Naive thymus-derived CD4-positive, alpha-beta T cell (primary cell): ENCODE measurements at regions of chr11 and their contacts with region 1.

Region 1: DNA sequence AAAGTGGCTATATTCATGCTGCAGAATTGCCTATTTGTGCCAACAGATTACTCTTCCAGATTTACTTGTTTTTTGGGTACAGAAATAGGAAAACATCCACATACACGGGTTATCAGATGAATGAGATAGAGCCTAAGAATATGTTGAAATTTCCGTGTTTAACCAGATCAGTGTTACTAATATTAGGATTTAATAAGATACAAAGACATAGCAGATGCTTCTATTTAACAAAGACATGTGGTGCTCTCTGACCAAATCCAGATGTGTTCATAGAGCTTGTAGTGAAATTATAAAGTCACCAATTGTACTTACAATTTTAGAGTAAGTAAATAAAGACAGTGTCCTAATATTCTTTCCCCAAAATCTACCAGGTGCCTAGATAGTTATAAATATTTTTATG is 208.0 kb downstream of the CASP12 start:
- DNase-seq: no peak
- ATAC-seq: no peak
- H3K4me3 ChIP-seq: no peak overlapping the region
- H3K4me3 Mint-ChIP-seq: no peak overlapping the region
- H3K27ac ChIP-seq: no peak overlapping the region
- H3K27ac Mint-ChIP-seq: no peak overlapping the region
- H3K4me1 ChIP-seq: no peaks in the 10 kb centered on the region
- H3K4me1 Mint-ChIP-seq: peaks cover 7 to 14% (median 9%) of the 10 kb centered on the region in 7 donors
- H3K27me3 ChIP-seq: no peaks in the 10 kb centered on the region
- H3K27me3 Mint-ChIP-seq: no peaks in the 10 kb centered on the region

Region 2: GRCh38 chr11:104700609-104701008 is 10.4 kb after region 1 on chr11:
- CTCF ChIA-PET with region 1: interaction called, 3 read pairs
- POLR2A ChIA-PET with region 1: no interaction called
- intact Hi-C with region 1: loop called in 1 of 2 experiments (anchors 1 kb)
- DNase-seq: peak in 5 of 9 donors; percentile 9 to 46 (median 30)
- ATAC-seq: peak; percentile 73
- H3K4me3 ChIP-seq: no peak overlapping the region
- H3K4me3 Mint-ChIP-seq: peak overlapping the region in 7 of 10 donors; percentile 11 to 65 (median 35)
- H3K27ac ChIP-seq: no peak overlapping the region
- H3K27ac Mint-ChIP-seq: peak overlapping the region in 6 of 9 donors; percentile 17 to 70 (median 28)
- H3K4me1 ChIP-seq: peaks cover 23 to 24% of the 10 kb centered on the region in 2 donors
- H3K4me1 Mint-ChIP-seq: peaks cover 22 to 42% (median 35%) of the 10 kb centered on the region in 7 donors
- H3K27me3 ChIP-seq: no peaks in the 10 kb centered on the region
- H3K27me3 Mint-ChIP-seq: no peaks in the 10 kb centered on the region